Caco-2 (cell line): ENCODE measurements at regions of chr11 and their contacts with region 1.

Region 1: GRCh38 chr11:96704847-96705246 is 315.0 kb downstream of the JRKL start:
- DNase-seq: peak in 1 of 2 experiments; percentile 20
- H3K4me3 ChIP-seq: no peak overlapping the region
- H3K4me3 Mint-ChIP-seq: no peak overlapping the region
- H3K27ac Mint-ChIP-seq: no peak overlapping the region
- H3K4me1 ChIP-seq: no peaks in the 10 kb centered on the region
- H3K4me1 Mint-ChIP-seq: no peaks in the 10 kb centered on the region
- H3K27me3 ChIP-seq: no peaks in the 10 kb centered on the region
- H3K27me3 Mint-ChIP-seq: peaks cover 16% of the 10 kb centered on the region
- CTCF ChIP-seq: peak in 1 of 2 experiments; percentile 41

Region 2: GRCh38 chr11:96664110-96664509 is 40.7 kb before region 1 on chr11:
- CTCF ChIA-PET with region 1: no interaction called
- POLR2A ChIA-PET with region 1: no interaction called
- intact Hi-C with region 1: no loop called
- DNase-seq: no peak
- H3K4me3 ChIP-seq: no peak overlapping the region
- H3K4me3 Mint-ChIP-seq: no peak overlapping the region
- H3K27ac Mint-ChIP-seq: no peak overlapping the region
- H3K4me1 ChIP-seq: peaks cover 13% of the 10 kb centered on the region; the same call in 1 of the 2 replicates
- H3K4me1 Mint-ChIP-seq: peaks cover 6% of the 10 kb centered on the region
- H3K27me3 ChIP-seq: no peaks in the 10 kb centered on the region
- H3K27me3 Mint-ChIP-seq: no peaks in the 10 kb centered on the region
- CTCF ChIP-seq: no peak

Region 3: GRCh38 chr11:96748639-96749370 is 44.0 kb after region 1 on chr11:
- CTCF ChIA-PET with region 1: no interaction called
- POLR2A ChIA-PET with region 1: no interaction called
- intact Hi-C with region 1: no loop called
- DNase-seq: no peak
- H3K4me3 ChIP-seq: no peak overlapping the region
- H3K4me3 Mint-ChIP-seq: no peak overlapping the region
- H3K27ac Mint-ChIP-seq: no peak overlapping the region
- H3K4me1 ChIP-seq: no peaks in the 10 kb centered on the region
- H3K4me1 Mint-ChIP-seq: no peaks in the 10 kb centered on the region
- H3K27me3 ChIP-seq: no peaks in the 10 kb centered on the region
- H3K27me3 Mint-ChIP-seq: no peaks in the 10 kb centered on the region
- CTCF ChIP-seq: no peak

Region 4: GRCh38 chr11:96794152-96794551 is 89.3 kb after region 1 on chr11:
- CTCF ChIA-PET with region 1: no interaction called
- POLR2A ChIA-PET with region 1: no interaction called
- intact Hi-C with region 1: loop called (anchors 2 kb)
- DNase-seq: peak in 1 of 2 experiments; percentile 31
- H3K4me3 ChIP-seq: no peak overlapping the region
- H3K4me3 Mint-ChIP-seq: no peak overlapping the region
- H3K27ac Mint-ChIP-seq: no peak overlapping the region
- H3K4me1 ChIP-seq: no peaks in the 10 kb centered on the region
- H3K4me1 Mint-ChIP-seq: no peaks in the 10 kb centered on the region
- H3K27me3 ChIP-seq: no peaks in the 10 kb centered on the region; the same call in none of the 2 replicates
- H3K27me3 Mint-ChIP-seq: peaks cover 18% of the 10 kb centered on the region
- CTCF ChIP-seq: peak; percentile 38 to 55

Region 5: DNA sequence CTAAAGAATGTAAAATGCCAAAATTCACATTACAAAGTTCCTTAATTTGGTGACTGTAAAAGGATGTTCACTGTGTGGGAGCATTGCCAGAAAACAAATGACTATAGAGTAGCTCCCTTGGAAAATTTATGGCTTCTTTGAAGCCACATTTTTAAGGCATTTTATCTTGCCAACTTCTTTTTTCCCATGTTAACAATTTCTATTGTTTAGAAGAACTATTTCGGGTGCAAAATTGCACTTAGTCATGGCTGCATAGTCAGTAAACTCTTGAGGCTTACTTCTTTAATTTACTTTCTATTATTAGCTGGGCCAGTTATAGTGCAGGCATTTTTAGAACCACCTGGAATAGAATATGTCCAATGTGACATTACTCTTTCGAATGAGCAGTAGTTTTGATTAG is 200.3 kb after region 1 on chr11:
- CTCF ChIA-PET with region 1: no interaction called
- POLR2A ChIA-PET with region 1: no interaction called
- intact Hi-C with region 1: loop called (anchors 10 kb)
- DNase-seq: no peak
- H3K4me3 ChIP-seq: no peak overlapping the region
- H3K4me3 Mint-ChIP-seq: no peak overlapping the region
- H3K27ac Mint-ChIP-seq: no peak overlapping the region
- H3K4me1 ChIP-seq: no peaks in the 10 kb centered on the region
- H3K4me1 Mint-ChIP-seq: no peaks in the 10 kb centered on the region
- H3K27me3 ChIP-seq: no peaks in the 10 kb centered on the region
- H3K27me3 Mint-ChIP-seq: peaks cover 5% of the 10 kb centered on the region
- CTCF ChIP-seq: no peak